Uterus (tissue), 4 donors: ENCODE measurements at regions of chr1 and their contacts with region 1.

Region 1: GRCh38 chr1:2044510-2045319 is 5.5 kb upstream of the PRKCZ start:
- DNase-seq: peak; percentile 24 to 73
- H3K4me3 ChIP-seq: no peak overlapping the region
- H3K27ac ChIP-seq: no peak overlapping the region
- H3K4me1 ChIP-seq: peaks cover 0 to 6% of the 10 kb centered on the region in 2 donors
- H3K27me3 ChIP-seq: peaks cover 3 to 6% of the 10 kb centered on the region in 2 donors
- CTCF ChIP-seq: peak; percentile 44 to 94 (median 82)
- POLR2A ChIP-seq: no peak

Region 2: GRCh38 chr1:1842360-1843146 is 202.2 kb before region 1 on chr1:
- intact Hi-C with region 1: no loop called
- DNase-seq: no peak
- H3K4me3 ChIP-seq: no peak overlapping the region
- H3K27ac ChIP-seq: no peak overlapping the region
- H3K4me1 ChIP-seq: peaks cover 3 to 23% of the 10 kb centered on the region in 2 donors
- H3K27me3 ChIP-seq: no peaks in the 10 kb centered on the region
- CTCF ChIP-seq: no peak
- POLR2A ChIP-seq: no peak

Region 3: GRCh38 chr1:1943834-1944570 is 100.7 kb before region 1 on chr1:
- intact Hi-C with region 1: loop called (anchors 5 kb)
- DNase-seq: peak in 1 of 2 donors; percentile 46
- H3K4me3 ChIP-seq: no peak overlapping the region
- H3K27ac ChIP-seq: no peak overlapping the region
- H3K4me1 ChIP-seq: no peaks in the 10 kb centered on the region
- H3K27me3 ChIP-seq: no peaks in the 10 kb centered on the region
- CTCF ChIP-seq: peak; percentile 71 to 87 (median 81)
- POLR2A ChIP-seq: no peak

Region 4: DNA sequence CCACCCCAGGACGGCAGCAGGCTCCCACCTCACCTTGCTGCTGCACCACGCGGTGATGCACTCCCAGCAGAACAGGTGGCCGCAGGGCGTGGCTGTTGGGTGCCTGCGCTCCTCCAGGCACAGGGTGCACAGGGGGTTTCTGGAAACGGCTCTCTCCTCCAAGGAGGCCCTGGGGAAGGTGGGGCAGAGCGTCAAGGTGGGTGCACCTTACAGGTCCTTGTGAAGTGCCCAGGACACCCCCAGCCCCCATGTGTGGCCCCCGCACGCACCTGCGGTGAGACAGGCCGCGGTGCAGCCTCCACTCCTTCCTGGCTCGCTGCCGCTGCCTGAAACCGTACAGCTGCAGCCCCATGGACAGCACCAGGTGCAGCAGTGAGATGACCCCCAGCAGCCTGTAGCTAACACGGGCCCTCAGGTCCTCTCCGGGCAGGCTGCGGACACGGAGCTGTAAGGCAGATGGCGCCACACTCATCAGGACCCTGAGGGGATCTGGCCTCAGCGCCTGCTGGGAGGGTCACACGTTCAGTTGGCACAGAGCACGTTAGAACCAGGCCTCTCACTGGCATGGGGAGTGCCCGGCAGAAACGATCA is 361.8 kb after region 1 on chr1:
- intact Hi-C with region 1: no loop called
- DNase-seq: no peak
- H3K4me3 ChIP-seq: no peak overlapping the region
- H3K27ac ChIP-seq: no peak overlapping the region
- H3K4me1 ChIP-seq: peaks cover 0 to under 1% of the 10 kb centered on the region in 2 donors
- H3K27me3 ChIP-seq: no peaks in the 10 kb centered on the region
- CTCF ChIP-seq: no peak
- POLR2A ChIP-seq: no peak